MCF 10A (cell line): ENCODE measurements at regions of chr10 and their contacts with region 1.

Region 1: DNA sequence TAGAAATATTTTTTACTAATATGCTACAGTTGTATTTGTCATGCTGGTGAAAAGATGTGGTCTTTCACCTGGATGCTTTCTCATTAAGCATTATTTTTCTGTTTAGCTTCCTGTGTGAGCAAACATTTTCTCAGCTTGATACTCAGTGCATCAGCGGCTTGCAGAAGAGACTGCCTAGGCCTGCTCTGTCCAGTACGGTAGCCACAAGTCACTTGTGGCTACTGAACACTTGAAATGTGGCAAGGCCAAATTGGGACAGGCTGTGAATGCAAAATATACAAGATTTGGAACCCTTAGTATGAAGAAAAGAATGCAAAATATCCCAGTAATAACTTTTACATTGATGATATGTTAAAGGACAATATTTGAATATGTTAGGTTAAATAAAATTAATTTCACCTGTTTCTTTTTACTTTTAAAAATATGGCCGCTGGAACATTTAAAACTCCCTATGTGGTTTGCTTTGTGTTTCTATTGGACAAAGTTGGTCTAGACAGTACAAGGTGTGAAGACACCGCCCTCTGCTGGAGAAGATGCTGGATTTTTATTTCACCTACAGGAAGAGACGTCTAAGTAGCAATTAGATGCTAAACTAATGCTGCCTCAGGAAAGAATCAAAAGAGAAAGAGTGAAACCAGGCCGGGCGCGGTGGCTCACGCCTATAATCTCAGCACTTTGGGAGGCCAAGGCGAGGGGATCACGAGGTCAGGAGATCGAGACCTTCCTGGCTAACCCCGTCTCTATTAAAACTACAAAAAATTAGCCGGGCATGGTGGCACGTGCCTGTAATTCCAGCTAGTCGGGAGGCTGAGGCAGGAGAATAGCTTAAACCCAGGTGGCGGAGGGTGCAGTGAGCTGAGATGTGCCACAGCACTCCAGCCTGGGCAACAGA is 5.3 kb downstream of the SRGN start:
- DNase-seq: peak; percentile 89
- H3K4me3 Mint-ChIP-seq: no peak overlapping the region
- H3K27ac Mint-ChIP-seq: no peak overlapping the region
- H3K4me1 Mint-ChIP-seq: peaks cover 7% of the 10 kb centered on the region
- H3K27me3 Mint-ChIP-seq: no peaks in the 10 kb centered on the region
- CTCF ChIP-seq: peak; percentile 72

Region 2: GRCh38 chr10:68973975-68974374 is 119.2 kb before region 1 on chr10:
- CTCF ChIA-PET with region 1: interaction called, 13 read pairs
- POLR2A ChIA-PET with region 1: no interaction called
- intact Hi-C with region 1: no loop called
- DNase-seq: no peak
- H3K4me3 Mint-ChIP-seq: no peak overlapping the region
- H3K27ac Mint-ChIP-seq: peak overlapping the region; percentile 46
- H3K4me1 Mint-ChIP-seq: peaks cover 3% of the 10 kb centered on the region
- H3K27me3 Mint-ChIP-seq: no peaks in the 10 kb centered on the region
- CTCF ChIP-seq: no peak

Region 3: GRCh38 chr10:69004821-69005220 is 88.4 kb before region 1 on chr10:
- CTCF ChIA-PET with region 1: interaction called, 81 read pairs
- POLR2A ChIA-PET with region 1: interaction called, 16 read pairs
- intact Hi-C with region 1: loop called (anchors 1 kb)
- DNase-seq: peak; percentile 47
- H3K4me3 Mint-ChIP-seq: no peak overlapping the region
- H3K27ac Mint-ChIP-seq: no peak overlapping the region
- H3K4me1 Mint-ChIP-seq: no peaks in the 10 kb centered on the region
- H3K27me3 Mint-ChIP-seq: no peaks in the 10 kb centered on the region
- CTCF ChIP-seq: peak; percentile 57

Region 4: GRCh38 chr10:69392481-69393000 is 299.3 kb after region 1 on chr10:
- CTCF ChIA-PET with region 1: interaction called, 3 read pairs
- POLR2A ChIA-PET with region 1: no interaction called
- intact Hi-C with region 1: loop called (anchors 5 kb)
- DNase-seq: peak; percentile 90
- H3K4me3 Mint-ChIP-seq: no peak overlapping the region
- H3K27ac Mint-ChIP-seq: peak overlapping the region; percentile 51
- H3K4me1 Mint-ChIP-seq: peaks cover 19% of the 10 kb centered on the region
- H3K27me3 Mint-ChIP-seq: no peaks in the 10 kb centered on the region
- CTCF ChIP-seq: peak; percentile 96